B cell (primary cell): ENCODE measurements at regions of chr7 and their contacts with region 1.

Region 1: GRCh38 chr7:974820-975681 is at the start of gene COX19:
- DNase-seq: peak; percentile 91
- ATAC-seq: peak; percentile 86
- H3K4me3 ChIP-seq: peak within 1 kb of the TSS; percentile 66 to 99 (median 91)
- H3K4me3 Mint-ChIP-seq: peak within 1 kb of the TSS; percentile 94
- H3K27ac ChIP-seq: peak within 1 kb of the TSS; percentile 93 to 95
- H3K27ac Mint-ChIP-seq: peak within 1 kb of the TSS; percentile 92
- H3K4me1 ChIP-seq: peaks cover 16 to 22% of the 10 kb centered on the region in 2 donors
- H3K4me1 Mint-ChIP-seq: peaks cover 24% of the 10 kb centered on the region
- H3K27me3 ChIP-seq: peaks cover 0 to 3% (median 0%) of the 10 kb centered on the region in 4 experiments
- H3K27me3 Mint-ChIP-seq: no peaks in the 10 kb centered on the region
- CTCF ChIP-seq: no peak
- total RNA-seq, gene COX19: 38.3 and 44.6 TPM in 2 replicates

Region 2: DNA sequence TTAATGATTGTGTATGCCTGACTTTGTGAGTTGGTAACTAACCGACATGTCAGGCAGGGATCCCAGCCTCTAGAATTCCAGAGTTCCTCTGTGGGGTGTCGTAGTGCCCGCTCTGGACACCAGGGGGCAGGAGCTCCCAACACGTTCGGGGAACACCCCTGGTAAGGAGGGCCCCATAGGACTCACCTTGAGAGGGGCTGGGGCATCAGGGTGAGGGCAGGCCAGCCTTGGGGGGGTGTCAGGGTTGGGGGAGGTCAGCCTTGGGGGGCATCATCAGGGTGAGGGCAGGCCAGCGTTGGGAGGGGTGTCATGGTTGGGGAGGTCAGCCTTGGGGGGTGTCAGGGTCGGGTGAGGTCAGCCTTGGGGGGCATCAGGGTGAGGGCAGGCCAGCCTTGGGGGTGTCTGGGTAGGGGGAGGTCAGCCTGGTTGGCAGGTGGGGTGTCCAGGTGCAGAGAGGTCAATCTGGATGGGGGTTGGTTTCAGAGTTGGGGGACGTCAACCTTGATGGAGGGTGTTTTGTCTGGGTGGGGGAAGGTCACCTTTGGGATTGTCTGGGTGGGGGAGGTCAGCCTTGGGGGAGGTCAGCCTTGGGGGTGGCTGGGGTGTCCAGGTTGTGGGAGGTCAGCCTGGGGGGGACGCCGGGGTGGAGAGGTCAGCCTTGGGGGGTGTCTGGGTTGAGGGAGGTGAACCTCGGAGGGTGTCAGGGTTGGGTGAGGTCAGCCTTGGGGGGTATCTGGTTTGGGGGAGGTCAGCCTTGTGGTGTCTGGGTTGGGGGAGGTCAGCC is 188.4 kb before region 1 on chr7:
- CTCF ChIA-PET with region 1: no interaction called
- POLR2A ChIA-PET with region 1: no interaction called
- intact Hi-C with region 1: loop called (anchors 10 kb)
- DNase-seq: peak; percentile 70
- ATAC-seq: peak; percentile 85
- H3K4me3 ChIP-seq: no peak overlapping the region
- H3K4me3 Mint-ChIP-seq: no peak overlapping the region
- H3K27ac ChIP-seq: no peak overlapping the region
- H3K27ac Mint-ChIP-seq: no peak overlapping the region
- H3K4me1 ChIP-seq: no peaks in the 10 kb centered on the region
- H3K4me1 Mint-ChIP-seq: no peaks in the 10 kb centered on the region
- H3K27me3 ChIP-seq: no peaks in the 10 kb centered on the region
- H3K27me3 Mint-ChIP-seq: no peaks in the 10 kb centered on the region
- CTCF ChIP-seq: peak; percentile 76

Region 3: GRCh38 chr7:909358-910329 is 65.4 kb before region 1 on chr7:
- CTCF ChIA-PET with region 1: interaction called, 14 read pairs
- POLR2A ChIA-PET with region 1: interaction called, 4 read pairs
- intact Hi-C with region 1: loop called (anchors 1 kb)
- DNase-seq: peak; percentile 85
- ATAC-seq: peak; percentile 40
- H3K4me3 ChIP-seq: peak overlapping the region in 4 of 5 experiments; percentile 29 to 61 (median 51)
- H3K4me3 Mint-ChIP-seq: peak overlapping the region; percentile 85
- H3K27ac ChIP-seq: peak overlapping the region; percentile 1 to 33
- H3K27ac Mint-ChIP-seq: peak overlapping the region; percentile 68
- H3K4me1 ChIP-seq: peaks cover 16 to 20% of the 10 kb centered on the region in 2 donors
- H3K4me1 Mint-ChIP-seq: peaks cover 18% of the 10 kb centered on the region
- H3K27me3 ChIP-seq: no peaks in the 10 kb centered on the region
- H3K27me3 Mint-ChIP-seq: no peaks in the 10 kb centered on the region
- CTCF ChIP-seq: no peak

Region 4: GRCh38 chr7:923108-924041 is 51.7 kb before region 1 on chr7:
- CTCF ChIA-PET with region 1: no interaction called
- POLR2A ChIA-PET with region 1: interaction called, 6 read pairs
- intact Hi-C with region 1: loop called (anchors 1 kb)
- DNase-seq: peak; percentile 88
- ATAC-seq: peak; percentile 87
- H3K4me3 ChIP-seq: peak overlapping the region; percentile 21 to 67 (median 55)
- H3K4me3 Mint-ChIP-seq: peak overlapping the region; percentile 88
- H3K27ac ChIP-seq: peak overlapping the region; percentile 84 to 85
- H3K27ac Mint-ChIP-seq: peak overlapping the region; percentile 93
- H3K4me1 ChIP-seq: peaks cover 31 to 55% of the 10 kb centered on the region in 2 donors
- H3K4me1 Mint-ChIP-seq: peaks cover 37% of the 10 kb centered on the region
- H3K27me3 ChIP-seq: no peaks in the 10 kb centered on the region
- H3K27me3 Mint-ChIP-seq: no peaks in the 10 kb centered on the region
- CTCF ChIP-seq: no peak

Region 5: DNA sequence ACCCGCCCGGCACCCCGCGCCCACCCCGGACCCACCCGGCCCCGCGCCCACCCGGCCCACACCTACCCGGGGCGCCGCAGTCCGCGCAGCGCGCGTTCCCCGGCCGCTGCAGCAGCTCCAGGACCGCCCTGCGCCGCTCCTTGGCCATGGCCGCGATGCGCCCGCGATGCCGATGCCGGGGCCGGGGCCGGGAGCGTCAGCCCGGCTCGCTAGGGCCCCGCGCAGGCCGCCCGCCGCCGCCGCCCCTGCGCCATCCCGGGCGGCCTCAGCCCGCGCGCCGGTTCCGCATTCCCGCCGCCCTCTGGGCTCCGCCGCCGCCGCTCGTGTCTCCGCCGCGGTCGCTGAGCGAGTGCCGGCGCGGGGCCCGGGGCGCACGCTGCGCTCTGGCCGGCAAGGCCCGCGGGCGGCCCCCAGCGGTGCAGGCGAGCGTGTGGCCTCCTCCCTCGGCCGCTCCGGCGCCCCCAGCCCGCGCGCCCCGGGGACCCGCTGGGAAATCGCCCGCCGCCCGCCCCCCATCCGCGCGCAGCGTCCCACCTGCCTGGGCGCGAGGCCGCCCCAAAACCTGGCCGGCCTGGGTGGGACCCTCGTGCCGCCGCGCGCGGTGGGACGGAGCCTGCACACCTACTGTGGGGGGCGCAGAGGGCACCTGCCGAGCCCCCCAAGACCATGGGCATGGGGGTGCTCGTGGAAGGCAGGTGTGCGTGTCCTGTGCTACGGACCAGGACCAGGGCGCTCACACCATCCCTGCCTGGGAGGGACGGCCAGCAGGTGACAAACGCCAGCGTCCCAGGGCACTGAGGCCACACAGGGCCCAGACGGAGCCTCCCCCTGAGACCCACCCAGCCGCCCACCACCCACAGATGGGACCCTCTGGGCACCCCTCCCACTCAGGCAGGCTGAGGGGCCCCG is 20.5 kb before region 1 on chr7 and contains the start of gene ADAP1:
- CTCF ChIA-PET with region 1: interaction called, 5 read pairs
- POLR2A ChIA-PET with region 1: no interaction called
- intact Hi-C with region 1: loop called (anchors 2 kb)
- DNase-seq: peak; percentile 76
- ATAC-seq: peak; percentile 71
- H3K4me3 ChIP-seq: peak within 1 kb of the TSS in 3 of 5 experiments; percentile 30 to 61 (median 45)
- H3K4me3 Mint-ChIP-seq: peak within 1 kb of the TSS; percentile 76
- H3K27ac ChIP-seq: no peak within 1 kb of the TSS
- H3K27ac Mint-ChIP-seq: peak within 1 kb of the TSS; percentile 32
- H3K4me1 ChIP-seq: peaks cover 7 to 38% of the 10 kb centered on the region in 2 donors
- H3K4me1 Mint-ChIP-seq: peaks cover 19% of the 10 kb centered on the region
- H3K27me3 ChIP-seq: peaks cover 0 to 21% (median 5%) of the 10 kb centered on the region in 4 experiments
- H3K27me3 Mint-ChIP-seq: peaks cover 3% of the 10 kb centered on the region
- CTCF ChIP-seq: no peak
- total RNA-seq, gene ADAP1: 12.9 and 15.6 TPM in 2 replicates

Region 6: GRCh38 chr7:1137510-1138167 is 162.6 kb after region 1 on chr7:
- CTCF ChIA-PET with region 1: interaction called, 4 read pairs
- POLR2A ChIA-PET with region 1: no interaction called
- intact Hi-C with region 1: loop called (anchors 5 kb)
- DNase-seq: no peak
- ATAC-seq: peak; percentile 64
- H3K4me3 ChIP-seq: peak overlapping the region; percentile 21 to 96 (median 75)
- H3K4me3 Mint-ChIP-seq: peak overlapping the region; percentile 89
- H3K27ac ChIP-seq: peak overlapping the region; percentile 73 to 91
- H3K27ac Mint-ChIP-seq: peak overlapping the region; percentile 92
- H3K4me1 ChIP-seq: peaks cover 28 to 37% of the 10 kb centered on the region in 2 donors
- H3K4me1 Mint-ChIP-seq: peaks cover 43% of the 10 kb centered on the region
- H3K27me3 ChIP-seq: no peaks in the 10 kb centered on the region
- H3K27me3 Mint-ChIP-seq: no peaks in the 10 kb centered on the region
- CTCF ChIP-seq: no peak

Region 7: DNA sequence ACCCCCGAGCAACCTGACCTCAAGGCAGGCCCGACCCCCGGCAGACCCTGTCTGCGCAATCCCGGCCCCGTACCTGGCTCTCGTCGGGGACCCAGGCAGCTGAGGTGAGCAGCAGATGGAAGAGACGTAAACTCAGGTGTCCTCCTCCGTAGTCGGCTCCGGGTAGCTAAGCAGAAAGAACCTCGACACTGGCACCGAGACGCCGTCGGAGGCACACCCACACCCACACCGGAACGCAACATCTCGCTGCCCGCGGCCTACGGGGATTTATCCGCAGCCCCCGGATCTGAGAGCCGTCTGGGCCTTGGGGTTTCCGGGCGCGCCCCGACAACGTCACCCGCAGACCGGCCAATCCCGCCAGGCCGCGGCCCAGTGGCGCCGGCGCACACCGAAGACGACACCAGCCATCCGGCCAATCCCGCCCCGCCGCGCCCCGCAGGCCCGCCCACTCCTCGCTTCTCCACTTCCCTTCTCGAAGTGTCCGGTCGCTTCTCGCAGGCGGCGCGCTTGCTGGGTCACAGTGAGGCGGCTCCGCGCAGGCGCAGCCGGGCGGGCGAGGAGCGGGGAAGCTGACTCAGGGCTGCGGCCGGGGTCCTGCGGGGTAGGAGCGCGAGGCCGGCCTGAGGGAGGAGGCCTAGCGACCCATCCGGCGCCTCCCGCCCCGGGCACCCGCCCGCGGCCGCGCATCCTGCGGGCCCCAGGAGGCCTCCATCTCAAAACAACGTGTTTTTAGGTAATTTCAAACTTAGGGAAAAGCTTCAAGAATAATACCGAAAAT is 185.0 kb after region 1 on chr7 and contains the start of gene ZFAND2A:
- CTCF ChIA-PET with region 1: no interaction called
- POLR2A ChIA-PET with region 1: no interaction called
- intact Hi-C with region 1: loop called (anchors 1 kb)
- DNase-seq: peak; percentile 98
- ATAC-seq: peak; percentile 97
- H3K4me3 ChIP-seq: peak within 1 kb of the TSS; percentile 79 to 99 (median 94)
- H3K4me3 Mint-ChIP-seq: peak within 1 kb of the TSS; percentile 87
- H3K27ac ChIP-seq: peak within 1 kb of the TSS; percentile 89 to 90
- H3K27ac Mint-ChIP-seq: peak within 1 kb of the TSS; percentile 90
- H3K4me1 ChIP-seq: peaks cover 16 to 22% of the 10 kb centered on the region in 2 donors
- H3K4me1 Mint-ChIP-seq: peaks cover 24% of the 10 kb centered on the region
- H3K27me3 ChIP-seq: no peaks in the 10 kb centered on the region
- H3K27me3 Mint-ChIP-seq: no peaks in the 10 kb centered on the region
- CTCF ChIP-seq: no peak
- total RNA-seq, gene ZFAND2A: 26.7 and 27.3 TPM in 2 replicates

Region 8: DNA sequence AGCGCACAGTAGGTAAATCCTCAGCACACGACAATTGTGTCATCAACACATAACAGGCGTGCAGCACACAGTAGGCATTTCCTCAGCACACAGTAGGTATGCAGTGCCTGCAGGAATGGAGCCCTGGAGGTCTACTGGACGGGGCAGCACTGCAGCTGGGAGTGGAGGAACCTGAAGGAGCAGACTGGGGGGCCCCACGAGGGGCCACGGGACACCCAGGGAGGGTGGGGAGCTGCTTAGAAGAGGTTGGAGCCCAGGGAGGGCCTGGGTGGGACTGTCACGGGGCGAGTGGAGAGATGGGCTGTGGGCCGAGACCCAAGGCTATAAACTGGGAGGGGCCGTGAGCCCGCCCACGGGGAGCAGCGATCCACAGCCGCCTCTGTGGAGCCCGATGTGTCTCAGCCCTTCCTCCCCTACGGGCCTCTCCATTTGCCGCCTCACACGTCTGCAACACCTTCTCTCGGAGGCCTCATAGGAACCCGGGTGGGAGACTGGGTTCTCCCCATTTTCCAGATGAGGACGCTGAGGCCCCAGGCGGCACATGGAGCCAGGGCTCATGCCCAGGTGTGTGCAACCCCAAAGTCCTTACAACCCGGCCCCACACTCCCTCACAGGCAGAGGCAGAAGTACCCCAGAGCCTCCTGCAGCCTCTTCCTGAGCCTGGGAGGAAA is 382.7 kb after region 1 on chr7:
- CTCF ChIA-PET with region 1: no interaction called
- POLR2A ChIA-PET with region 1: no interaction called
- intact Hi-C with region 1: no loop called
- DNase-seq: no peak
- ATAC-seq: no peak
- H3K4me3 ChIP-seq: no peak overlapping the region
- H3K4me3 Mint-ChIP-seq: no peak overlapping the region
- H3K27ac ChIP-seq: no peak overlapping the region
- H3K27ac Mint-ChIP-seq: no peak overlapping the region
- H3K4me1 ChIP-seq: no peaks in the 10 kb centered on the region
- H3K4me1 Mint-ChIP-seq: no peaks in the 10 kb centered on the region
- H3K27me3 ChIP-seq: no peaks in the 10 kb centered on the region
- H3K27me3 Mint-ChIP-seq: peaks cover 7% of the 10 kb centered on the region
- CTCF ChIP-seq: no peak